H1 (cell line): ENCODE measurements at regions of chr6 and their contacts with region 1.

Region 1: DNA sequence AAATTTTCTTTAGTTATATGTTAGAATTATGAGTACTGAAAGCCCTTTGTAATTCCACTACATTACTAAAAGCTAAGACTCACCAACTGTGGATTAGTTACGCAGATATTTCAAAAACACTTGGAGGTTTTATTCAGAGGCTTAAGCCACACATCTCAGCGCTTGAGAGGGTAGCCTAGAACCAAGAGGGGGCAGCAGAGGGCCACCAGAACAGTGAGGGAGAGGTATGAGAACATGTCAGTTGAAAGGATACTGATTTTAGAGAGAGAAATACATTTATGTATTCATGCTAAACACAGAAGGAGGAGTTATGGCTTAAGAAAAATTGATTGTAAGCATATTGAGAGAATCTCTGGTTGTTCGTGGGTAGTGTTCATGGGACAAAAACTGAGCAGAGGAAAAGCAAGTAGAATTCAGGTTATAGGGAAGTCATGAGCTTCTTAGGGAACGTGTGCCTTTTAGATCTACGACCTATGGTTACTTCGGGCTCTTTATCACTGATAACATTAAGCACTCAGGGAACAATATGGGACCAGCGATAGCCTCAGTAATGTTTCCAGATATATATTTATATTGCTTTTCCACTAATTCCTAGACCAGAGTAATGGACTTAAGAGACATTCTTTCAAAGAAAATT is 20.4 kb upstream of the SERINC1 start:
- DNase-seq: peak in 1 of 2 experiments; percentile 74
- H3K4me3 ChIP-seq: no peak overlapping the region
- H3K27ac ChIP-seq: no peak overlapping the region
- H3K4me1 ChIP-seq: no peaks in the 10 kb centered on the region
- H3K27me3 ChIP-seq: no peaks in the 10 kb centered on the region
- CTCF ChIP-seq: peak; percentile 64 to 82 (median 75)
- EP300 ChIP-seq: no peak
- POLR2A ChIP-seq: no peak
- RAD21 ChIP-seq: peak; percentile 85 to 87

Region 2: GRCh38 chr6:122471107-122472021 is 20.7 kb before region 1 on chr6 and contains the start of gene SERINC1:
- CTCF ChIA-PET with region 1: interaction called, 16 read pairs
- POLR2A ChIA-PET with region 1: no interaction called
- DNase-seq: peak; percentile 71 to 83
- H3K4me3 ChIP-seq: peak within 1 kb of the TSS; percentile 91 to 99 (median 94)
- H3K27ac ChIP-seq: peak within 1 kb of the TSS; percentile 94
- H3K4me1 ChIP-seq: no peaks in the 10 kb centered on the region
- H3K27me3 ChIP-seq: no peaks in the 10 kb centered on the region
- CTCF ChIP-seq: no peak
- EP300 ChIP-seq: no peak
- POLR2A ChIP-seq: peak; percentile 87 to 90
- RAD21 ChIP-seq: no peak
- total RNA-seq, gene SERINC1: 38.0 and 38.6 TPM in 2 replicates

Region 3: GRCh38 chr6:122511193-122511924 is 19.3 kb after region 1 on chr6:
- CTCF ChIA-PET with region 1: interaction called, 24 read pairs
- POLR2A ChIA-PET with region 1: no interaction called
- DNase-seq: no peak
- H3K4me3 ChIP-seq: no peak overlapping the region
- H3K27ac ChIP-seq: no peak overlapping the region
- H3K4me1 ChIP-seq: no peaks in the 10 kb centered on the region
- H3K27me3 ChIP-seq: no peaks in the 10 kb centered on the region
- CTCF ChIP-seq: no peak
- EP300 ChIP-seq: no peak
- POLR2A ChIP-seq: no peak
- RAD21 ChIP-seq: no peak